ENCODE measurements at regions of chr15 and their contacts with region 1.

Region 1: GRCh38 chr15:79339564-79340314 is 28.8 kb downstream of the TMED3 start:
- DNase-seq: no peak
- H3K4me3 ChIP-seq: no peak overlapping the region
- H3K27ac ChIP-seq: no peak overlapping the region
- H3K4me1 ChIP-seq: no peaks in the 10 kb centered on the region
- H3K27me3 ChIP-seq: no peaks in the 10 kb centered on the region
- CTCF ChIP-seq: peak in 2 of 3 experiments; percentile 50 to 63

Region 2: GRCh38 chr15:79853458-79854328 is 514.0 kb after region 1 on chr15:
- intact Hi-C with region 1: loop called (anchors 5 kb)
- DNase-seq: peak in 1 of 2 donors; percentile 74
- H3K4me3 ChIP-seq: no peak overlapping the region
- H3K27ac ChIP-seq: no peak overlapping the region
- H3K4me1 ChIP-seq: no peaks in the 10 kb centered on the region
- H3K27me3 ChIP-seq: no peaks in the 10 kb centered on the region
- CTCF ChIP-seq: peak; percentile 65 to 93 (median 87)

Measured in ascending aorta (tissue), 2 donors.